ENCODE measurements at regions of chr10 and their contacts with region 1.

Region 1: DNA sequence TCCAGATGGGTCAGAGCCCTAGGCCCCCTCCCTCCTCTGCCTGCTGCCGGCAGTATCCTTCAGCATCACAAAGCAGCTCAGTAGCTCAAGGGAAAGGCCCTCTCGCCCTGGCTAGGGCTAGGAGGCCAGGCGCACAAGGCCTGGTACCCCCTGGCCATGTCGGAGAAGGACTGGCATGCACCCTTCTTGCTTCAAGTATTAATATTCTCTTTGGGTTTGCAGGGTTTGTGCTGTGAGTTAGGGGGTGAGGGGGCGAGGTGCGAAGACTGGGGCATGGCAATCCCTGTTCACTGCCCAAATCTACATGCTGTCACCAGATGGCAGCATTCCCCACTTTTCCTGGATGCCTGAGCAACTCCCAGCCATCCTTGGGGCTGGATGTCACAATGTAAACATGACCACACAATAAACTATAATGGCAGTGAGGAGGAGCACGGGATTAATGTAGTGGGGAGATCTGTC is 105.2 kb downstream of the NEURL1 start:
- DNase-seq: no peak
- ATAC-seq: peak; percentile 66

Region 2: GRCh38 chr10:103678178-103678526 is 79.5 kb after region 1 on chr10:
- intact Hi-C with region 1: loop called (anchors 5 kb)
- DNase-seq: peak; percentile 87
- ATAC-seq: peak; percentile 87

Region 3: DNA sequence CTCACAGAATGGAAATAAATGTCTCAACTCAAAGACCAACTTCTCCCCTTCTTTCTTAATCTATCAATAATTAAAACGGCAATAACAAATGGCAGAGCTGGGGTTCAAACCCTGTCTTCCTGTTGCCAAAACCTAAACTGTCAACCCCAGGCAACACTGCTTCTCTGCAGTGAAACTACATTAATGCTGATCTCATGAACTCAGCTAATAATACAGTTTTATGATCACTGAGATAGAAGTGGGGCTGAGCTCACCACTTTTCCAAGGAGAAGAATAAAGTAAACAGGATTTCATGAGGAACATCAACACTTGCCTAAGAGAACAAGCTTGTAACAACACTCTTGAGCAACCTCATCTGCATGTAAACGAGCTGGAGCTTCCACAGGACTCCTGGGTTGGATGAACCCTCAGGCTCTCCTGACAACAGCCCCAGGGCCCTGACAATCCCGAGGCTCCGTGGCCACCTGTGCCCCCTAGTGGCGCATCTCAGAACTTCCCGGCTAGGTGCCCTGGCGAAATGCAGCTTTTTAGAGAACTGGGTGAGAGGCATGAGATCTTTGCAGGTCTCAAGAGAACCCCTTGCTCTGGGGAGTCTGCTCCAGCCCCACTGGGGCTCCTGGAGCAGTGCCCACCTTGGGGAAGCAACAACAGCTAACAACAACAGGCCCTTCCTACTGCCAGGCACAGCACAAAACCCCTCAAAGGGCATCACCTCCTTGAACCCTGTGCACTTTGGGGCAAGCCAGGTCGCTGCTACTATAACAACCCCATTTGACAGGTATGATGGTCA is 87.4 kb after region 1 on chr10:
- intact Hi-C with region 1: loop called (anchors 5 kb)
- DNase-seq: peak; percentile 87
- ATAC-seq: peak; percentile 79